ENCODE measurements at regions of chr4 and their contacts with region 1.

Region 1: GRCh38 chr4:15794905-15795304 is 16.8 kb downstream of the CD38 start:
- DNase-seq: no peak
- H3K4me3 ChIP-seq: no peak overlapping the region
- H3K27ac ChIP-seq: no peak overlapping the region
- H3K4me1 ChIP-seq: no peaks in the 10 kb centered on the region
- H3K27me3 ChIP-seq: no peaks in the 10 kb centered on the region
- CTCF ChIP-seq: no peak
- EP300 ChIP-seq: no peak
- POLR2A ChIP-seq: no peak

Region 2: DNA sequence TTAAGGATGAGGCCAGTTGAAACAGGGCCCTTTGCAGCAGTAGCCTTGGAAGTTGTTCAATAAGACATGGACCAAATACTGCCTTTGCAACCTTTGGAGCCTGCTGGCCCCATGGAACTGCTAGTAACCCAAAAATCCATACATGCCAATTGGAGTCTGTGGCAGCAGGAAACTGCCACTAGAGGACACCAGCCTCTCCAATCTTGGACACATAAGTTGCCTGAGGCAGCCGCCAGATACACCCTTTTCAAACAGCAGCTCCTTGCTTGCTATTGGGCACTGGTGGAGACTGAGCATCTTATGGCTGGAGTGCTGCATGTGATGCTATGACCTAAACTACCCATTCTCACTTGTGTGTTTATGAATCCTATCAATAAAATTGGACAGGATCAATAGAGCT is 1767.3 kb after region 1 on chr4:
- intact Hi-C with region 1: loop called in 1 of 4 experiments (anchors 5 kb)
- DNase-seq: no peak
- H3K4me3 ChIP-seq: no peak overlapping the region
- H3K27ac ChIP-seq: no peak overlapping the region
- H3K4me1 ChIP-seq: no peaks in the 10 kb centered on the region
- H3K27me3 ChIP-seq: no peaks in the 10 kb centered on the region
- CTCF ChIP-seq: no peak
- EP300 ChIP-seq: no peak
- POLR2A ChIP-seq: no peak